GM10248 (cell line): ENCODE measurements at regions of chr20 and their contacts with region 1.

Region 1: GRCh38 chr20:330233-331149 is 5.1 kb downstream of the SOX12 start:
- DNase-seq: peak; percentile 80
- CTCF ChIP-seq: peak; percentile 85

Region 2: GRCh38 chr20:215796-216195 is 114.7 kb before region 1 on chr20:
- CTCF ChIA-PET with region 1: interaction called, 16 read pairs
- POLR2A ChIA-PET with region 1: interaction called, 3 read pairs
- DNase-seq: no peak
- CTCF ChIP-seq: no peak

Region 3: DNA sequence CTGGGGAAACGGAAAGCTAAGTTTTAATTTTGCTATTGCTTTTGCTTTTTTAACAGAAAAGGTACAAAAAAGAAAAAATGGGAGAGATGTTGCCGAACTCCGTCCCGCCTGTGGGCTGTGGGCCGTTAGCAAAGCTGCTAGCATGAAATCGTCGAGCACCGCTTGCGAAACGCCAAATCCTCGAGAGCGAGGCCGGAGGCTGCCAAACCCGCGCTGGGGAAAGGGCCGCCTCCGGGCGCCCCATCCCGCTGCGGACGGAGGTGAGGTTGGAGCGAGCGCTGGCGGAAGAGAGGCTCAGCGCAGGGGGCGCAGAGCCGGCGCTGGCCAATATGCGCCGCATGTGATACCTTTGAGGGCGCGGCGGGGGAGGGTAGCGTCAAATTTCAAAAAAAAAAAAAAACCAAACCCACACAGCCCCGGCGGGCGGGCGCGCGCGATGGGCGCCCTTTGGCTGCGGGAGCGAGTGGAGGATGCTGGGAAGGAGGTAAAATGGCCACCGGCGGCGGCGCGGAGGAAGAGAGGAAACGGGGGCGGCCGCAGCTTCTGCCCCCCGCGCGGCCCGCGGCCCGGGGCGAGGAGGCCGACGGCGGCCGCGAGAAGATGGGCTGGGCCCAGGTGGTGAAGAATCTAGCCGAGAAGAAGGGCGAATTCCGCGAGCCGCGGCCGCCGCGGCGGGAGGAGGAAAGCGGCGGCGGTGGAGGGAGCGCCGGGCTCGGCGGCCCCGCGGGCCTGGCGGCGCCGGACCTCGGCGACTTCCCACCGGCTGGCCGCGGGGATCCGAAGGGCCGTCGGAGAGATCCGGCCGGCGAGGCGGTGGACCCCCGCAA is 33.2 kb before region 1 on chr20 and contains the start of gene ZCCHC3:
- CTCF ChIA-PET with region 1: interaction called, 37 read pairs
- POLR2A ChIA-PET with region 1: interaction called, 7 read pairs
- DNase-seq: peak; percentile 91
- CTCF ChIP-seq: peak; percentile 25

Region 4: DNA sequence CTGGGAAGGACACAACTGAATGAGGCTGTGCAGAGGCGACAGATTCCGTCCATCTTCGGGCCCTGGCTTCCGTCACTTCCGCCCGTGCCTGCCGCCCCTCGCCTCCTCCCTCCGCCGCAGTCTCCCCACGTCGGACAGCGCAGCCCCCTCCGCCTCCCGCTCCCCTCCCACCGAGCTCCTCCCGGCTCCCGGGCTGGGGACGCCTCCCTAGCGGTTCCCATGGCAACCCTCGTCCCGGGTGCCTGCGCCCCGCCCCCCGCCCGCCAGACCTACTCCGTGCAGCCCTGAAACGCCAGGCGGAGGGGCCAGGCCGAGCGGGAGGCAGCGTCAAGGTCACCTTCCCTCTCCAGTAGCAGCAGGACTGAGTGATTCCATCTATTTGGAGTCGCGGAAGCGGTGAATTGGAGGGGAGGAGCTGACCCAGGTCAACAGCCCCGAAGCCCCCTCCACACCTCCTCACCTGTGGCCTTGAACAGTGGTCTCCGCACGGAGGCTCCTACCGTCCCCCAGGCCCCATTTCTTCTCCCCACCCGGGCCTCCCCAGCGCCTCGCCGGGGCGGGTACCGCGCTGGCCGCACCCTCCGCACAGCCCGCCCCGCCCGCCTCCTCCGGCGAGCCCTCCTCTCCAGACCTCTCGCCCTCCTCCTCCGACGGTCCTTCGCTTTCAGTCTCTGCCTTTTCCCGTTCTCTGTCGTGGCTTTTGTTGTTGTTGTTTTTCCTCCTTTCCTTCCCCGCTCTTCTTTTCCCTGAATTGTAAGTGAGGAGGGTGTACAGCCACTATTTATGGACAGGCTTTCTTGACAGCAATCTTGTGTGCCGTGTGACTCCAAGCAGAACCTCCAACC is 17.4 kb after region 1 on chr20:
- CTCF ChIA-PET with region 1: interaction called, 83 read pairs
- POLR2A ChIA-PET with region 1: no interaction called
- DNase-seq: peak; percentile 96
- CTCF ChIP-seq: peak; percentile 1

Region 5: GRCh38 chr20:415820-416322 is 85.4 kb after region 1 on chr20:
- CTCF ChIA-PET with region 1: no interaction called
- POLR2A ChIA-PET with region 1: no interaction called
- DNase-seq: no peak
- CTCF ChIP-seq: no peak